ENCODE measurements at regions of chr15 and their contacts with region 1.

Region 1: DNA sequence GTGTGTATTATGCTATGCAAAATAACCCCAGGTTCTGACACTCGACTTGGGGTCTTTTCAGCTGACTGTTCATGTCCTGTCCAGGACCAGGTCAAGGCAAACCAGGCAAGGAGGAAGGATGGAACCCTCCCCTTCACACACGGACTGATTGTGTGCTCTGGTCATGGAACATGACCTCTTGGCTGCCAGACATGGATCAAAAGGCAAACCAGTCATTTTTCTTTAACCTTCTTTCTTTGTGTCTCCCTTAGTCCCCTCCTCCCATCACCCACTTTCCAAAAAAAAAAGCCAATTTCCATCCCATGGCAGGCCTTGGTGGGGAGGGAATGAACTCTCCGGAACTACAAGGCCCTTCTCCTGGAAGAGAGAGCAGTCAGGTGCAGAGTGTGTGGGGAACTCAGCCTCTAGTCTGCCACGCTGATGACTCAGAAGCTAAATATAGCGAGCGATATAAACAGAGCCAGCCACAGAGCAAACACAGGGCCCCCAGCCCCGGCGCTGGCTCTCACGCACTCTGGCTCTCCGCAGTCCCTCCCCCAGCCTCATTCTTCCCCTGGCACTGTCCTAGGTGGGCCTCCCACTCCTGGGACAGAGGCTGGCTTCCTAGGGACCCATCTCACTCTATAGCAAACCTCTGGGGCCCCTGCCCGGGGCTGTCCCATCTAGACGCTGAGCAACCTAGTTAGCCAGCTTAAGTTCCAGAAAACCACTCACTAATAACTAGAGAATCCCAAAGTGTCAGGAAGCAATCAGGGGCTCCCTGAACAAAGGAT is 10.0 kb downstream of the BMF start:
- DNase-seq: peak; percentile 72
- H3K4me3 Mint-ChIP-seq: peak overlapping the region; percentile 74
- H3K27ac Mint-ChIP-seq: peak overlapping the region; percentile 99
- H3K4me1 Mint-ChIP-seq: peaks cover 87% of the 10 kb centered on the region
- H3K27me3 Mint-ChIP-seq: peaks cover 2% of the 10 kb centered on the region

Region 2: DNA sequence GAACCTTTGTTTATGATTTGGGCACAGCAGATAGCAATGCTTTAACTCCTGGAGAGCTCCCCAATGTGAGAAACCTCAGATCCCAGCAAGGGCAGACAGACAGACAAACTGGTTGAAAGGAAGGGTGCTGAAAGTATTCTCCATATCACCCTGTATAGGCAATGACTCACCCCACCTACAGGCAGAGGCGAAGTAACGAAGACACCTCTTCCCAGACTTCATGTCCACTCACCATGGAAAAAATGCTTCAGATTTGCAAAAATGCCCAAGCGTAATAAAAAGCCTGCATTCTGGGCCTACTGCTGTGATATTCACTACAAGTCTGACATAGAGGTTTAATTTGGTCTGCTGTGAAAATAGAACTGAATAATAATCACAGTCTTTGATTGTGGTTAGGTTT is 467.3 kb before region 1 on chr15:
- intact Hi-C with region 1: loop called (anchors 5 kb)
- DNase-seq: no peak
- H3K4me3 Mint-ChIP-seq: peak overlapping the region; percentile 77
- H3K27ac Mint-ChIP-seq: peak overlapping the region; percentile 95
- H3K4me1 Mint-ChIP-seq: peaks cover 51% of the 10 kb centered on the region
- H3K27me3 Mint-ChIP-seq: no peaks in the 10 kb centered on the region

Region 3: GRCh38 chr15:39860200-39860599 is 238.5 kb before region 1 on chr15:
- intact Hi-C with region 1: no loop called
- DNase-seq: no peak
- H3K4me3 Mint-ChIP-seq: no peak overlapping the region
- H3K27ac Mint-ChIP-seq: no peak overlapping the region
- H3K4me1 Mint-ChIP-seq: no peaks in the 10 kb centered on the region
- H3K27me3 Mint-ChIP-seq: peaks cover 12% of the 10 kb centered on the region

Region 4: DNA sequence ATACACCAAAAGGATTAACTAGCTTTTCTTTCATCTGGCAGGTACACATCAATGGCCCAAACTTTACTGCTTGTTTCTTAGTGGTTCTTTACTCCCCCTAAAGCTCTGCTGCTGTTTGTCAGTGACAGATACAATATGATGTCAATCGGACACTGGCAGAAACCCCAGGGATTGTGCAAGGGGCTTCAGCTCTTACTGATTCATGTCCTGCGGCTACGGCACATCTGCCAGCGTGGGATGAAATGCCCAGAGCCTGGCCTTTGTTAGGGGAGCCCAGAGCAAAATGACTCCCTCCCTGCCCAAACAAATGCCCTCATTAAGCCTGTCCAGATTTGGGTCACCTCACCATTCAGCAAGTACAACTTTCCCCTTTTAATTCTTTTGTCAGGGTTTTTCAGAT is 88.0 kb before region 1 on chr15:
- intact Hi-C with region 1: no loop called
- DNase-seq: no peak
- H3K4me3 Mint-ChIP-seq: no peak overlapping the region
- H3K27ac Mint-ChIP-seq: no peak overlapping the region
- H3K4me1 Mint-ChIP-seq: no peaks in the 10 kb centered on the region
- H3K27me3 Mint-ChIP-seq: no peaks in the 10 kb centered on the region

Region 5: DNA sequence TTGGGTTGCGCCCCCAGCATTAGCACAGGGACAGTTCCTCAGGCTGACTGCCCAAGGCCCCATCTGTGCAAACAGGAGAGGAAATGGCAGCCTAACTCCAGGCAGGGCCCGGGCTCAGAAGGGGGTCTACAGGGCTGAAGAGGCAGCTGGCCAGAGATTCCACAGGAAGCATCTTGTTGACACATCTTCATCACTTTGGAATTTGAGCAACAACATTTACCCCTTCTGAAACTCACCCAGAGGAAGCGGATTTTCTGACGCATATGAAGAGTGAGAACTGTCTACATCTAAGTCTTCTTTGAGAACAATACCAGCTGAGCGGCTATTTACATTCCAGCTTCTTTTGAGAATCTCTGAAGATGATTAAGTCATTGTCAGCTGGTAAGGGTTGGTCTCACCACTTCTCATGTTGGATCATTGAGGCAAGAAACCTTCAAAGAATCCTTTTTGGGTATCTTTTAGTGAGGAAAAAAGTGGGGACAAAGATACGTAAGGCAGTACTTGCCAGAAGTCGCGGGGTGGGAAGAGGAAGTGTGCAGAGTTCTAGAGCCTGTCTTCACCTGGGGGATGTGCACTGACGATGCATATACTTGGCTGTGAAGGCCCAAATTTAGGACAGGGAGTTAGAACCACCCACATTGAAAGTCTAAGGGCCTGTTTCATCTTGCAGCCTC is 34.3 kb before region 1 on chr15:
- intact Hi-C with region 1: loop called (anchors 1 kb)
- DNase-seq: no peak
- H3K4me3 Mint-ChIP-seq: peak overlapping the region; percentile 68
- H3K27ac Mint-ChIP-seq: peak overlapping the region; percentile 90
- H3K4me1 Mint-ChIP-seq: peaks cover 19% of the 10 kb centered on the region
- H3K27me3 Mint-ChIP-seq: no peaks in the 10 kb centered on the region

Region 6: GRCh38 chr15:40085266-40085665 is 13.4 kb before region 1 on chr15:
- intact Hi-C with region 1: loop called (anchors 2 kb)
- DNase-seq: no peak
- H3K4me3 Mint-ChIP-seq: no peak overlapping the region
- H3K27ac Mint-ChIP-seq: no peak overlapping the region
- H3K4me1 Mint-ChIP-seq: peaks cover 42% of the 10 kb centered on the region
- H3K27me3 Mint-ChIP-seq: peaks cover 25% of the 10 kb centered on the region

Region 7: DNA sequence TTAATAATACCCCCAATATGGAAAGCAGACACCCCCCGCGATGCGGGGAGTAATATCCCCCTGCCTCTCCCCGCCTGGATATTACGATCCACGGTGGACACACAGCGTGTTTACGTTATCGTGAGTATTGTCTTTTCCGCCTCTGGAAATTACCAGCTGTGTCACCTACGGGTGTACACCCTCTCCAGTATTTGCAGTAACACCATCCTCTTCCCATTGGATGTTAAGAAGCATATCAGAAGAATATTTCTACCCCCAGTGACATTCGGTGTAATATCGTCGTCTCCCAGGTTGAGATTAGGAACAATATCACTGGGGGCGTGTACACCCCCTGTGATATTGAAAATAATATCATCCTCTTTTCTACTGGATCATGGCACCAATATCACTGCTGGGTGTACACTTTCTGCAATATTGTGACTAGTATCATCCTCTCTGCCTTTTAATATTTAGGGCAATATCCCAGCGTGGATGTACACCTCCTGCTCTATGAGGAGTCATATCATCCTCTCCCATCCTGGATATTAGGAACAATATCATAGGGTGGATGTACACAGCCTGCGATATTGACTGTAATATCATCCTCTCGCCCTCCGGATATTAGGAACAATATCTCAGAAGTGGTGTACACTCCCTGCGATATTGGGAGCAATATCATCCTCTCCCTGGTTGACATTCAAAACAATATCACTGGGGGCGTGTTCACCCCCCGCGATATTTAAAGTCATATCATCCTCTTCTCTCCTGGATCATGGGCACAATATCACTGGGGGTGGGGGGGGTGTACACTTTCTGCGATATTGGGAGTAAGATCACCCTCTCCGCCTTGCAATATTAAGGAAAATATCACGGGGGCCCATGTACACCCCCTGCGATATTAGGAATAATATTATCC is 30.3 kb after region 1 on chr15:
- intact Hi-C with region 1: loop called (anchors 2 kb)
- DNase-seq: no peak
- H3K4me3 Mint-ChIP-seq: no peak overlapping the region
- H3K27ac Mint-ChIP-seq: no peak overlapping the region
- H3K4me1 Mint-ChIP-seq: no peaks in the 10 kb centered on the region
- H3K27me3 Mint-ChIP-seq: no peaks in the 10 kb centered on the region

Region 8: GRCh38 chr15:40160689-40161688 is 62.3 kb after region 1 on chr15 and contains the start of gene BUB1B:
- intact Hi-C with region 1: loop called (anchors 2 kb)
- DNase-seq: peak; percentile 93
- H3K4me3 Mint-ChIP-seq: no peak within 1 kb of the TSS
- H3K27ac Mint-ChIP-seq: no peak within 1 kb of the TSS
- H3K4me1 Mint-ChIP-seq: peaks cover 10% of the 10 kb centered on the region
- H3K27me3 Mint-ChIP-seq: no peaks in the 10 kb centered on the region
- total RNA-seq, gene BUB1B: 71.0 and 76.1 TPM in 2 replicates